ENCODE measurements at regions of chr3 and their contacts with region 1.

Region 1: DNA sequence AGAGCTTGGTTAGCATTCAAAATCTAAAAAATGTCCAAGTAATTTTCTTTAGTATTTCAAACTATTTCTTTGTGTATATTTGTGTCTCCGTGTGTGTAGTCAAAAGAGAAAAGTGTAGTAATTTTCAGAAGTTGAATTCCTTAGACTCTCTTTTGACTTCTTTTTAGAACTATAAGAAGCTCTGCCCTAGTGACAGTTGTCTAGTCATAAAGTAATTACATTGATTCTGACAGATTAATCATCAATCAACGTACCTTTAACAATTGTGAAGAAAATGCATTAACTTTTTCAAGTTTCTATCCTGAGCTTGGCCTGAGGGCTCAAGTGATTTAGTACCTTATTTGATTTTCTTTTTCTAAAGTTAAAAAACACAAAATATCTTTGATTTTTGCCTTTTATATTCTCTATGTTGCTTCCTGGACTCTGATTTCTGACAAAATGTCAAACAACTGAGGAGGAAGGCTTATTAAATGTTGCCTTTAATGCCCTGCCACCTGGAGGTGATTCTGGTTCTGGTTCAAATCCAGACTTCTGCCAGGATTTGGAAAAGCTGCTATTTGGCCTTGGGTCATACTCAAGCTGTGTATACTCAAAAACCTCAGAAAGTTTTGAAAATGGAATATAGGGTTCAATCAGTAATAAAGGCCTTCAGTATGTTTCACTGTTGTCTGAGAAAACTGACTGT is 653.6 kb downstream of the NSUN3 start:
- DNase-seq: peak; percentile 22
- H3K4me3 Mint-ChIP-seq: no peak overlapping the region
- H3K27ac Mint-ChIP-seq: no peak overlapping the region
- H3K4me1 Mint-ChIP-seq: no peaks in the 10 kb centered on the region
- H3K27me3 Mint-ChIP-seq: no peaks in the 10 kb centered on the region
- CTCF ChIP-seq: no peak

Region 2: GRCh38 chr3:94249585-94249984 is 466.9 kb before region 1 on chr3:
- CTCF ChIA-PET with region 1: no interaction called
- intact Hi-C with region 1: loop called (anchors 10 kb)
- DNase-seq: peak; percentile 78
- H3K4me3 Mint-ChIP-seq: no peak overlapping the region
- H3K27ac Mint-ChIP-seq: no peak overlapping the region
- H3K4me1 Mint-ChIP-seq: no peaks in the 10 kb centered on the region
- H3K27me3 Mint-ChIP-seq: no peaks in the 10 kb centered on the region
- CTCF ChIP-seq: peak; percentile 64

Region 3: GRCh38 chr3:94336046-94336710 is 380.3 kb before region 1 on chr3:
- CTCF ChIA-PET with region 1: interaction called, 3 read pairs
- intact Hi-C with region 1: loop called (anchors 1 kb)
- DNase-seq: peak; percentile 21
- H3K4me3 Mint-ChIP-seq: no peak overlapping the region
- H3K27ac Mint-ChIP-seq: no peak overlapping the region
- H3K4me1 Mint-ChIP-seq: peaks cover 10% of the 10 kb centered on the region
- H3K27me3 Mint-ChIP-seq: no peaks in the 10 kb centered on the region
- CTCF ChIP-seq: no peak

Region 4: GRCh38 chr3:94522488-94522887 is 194.0 kb before region 1 on chr3:
- CTCF ChIA-PET with region 1: no interaction called
- intact Hi-C with region 1: loop called (anchors 1 kb)
- DNase-seq: peak; percentile 11
- H3K4me3 Mint-ChIP-seq: no peak overlapping the region
- H3K27ac Mint-ChIP-seq: no peak overlapping the region
- H3K4me1 Mint-ChIP-seq: no peaks in the 10 kb centered on the region
- H3K27me3 Mint-ChIP-seq: no peaks in the 10 kb centered on the region
- CTCF ChIP-seq: peak; percentile 29

Region 5: DNA sequence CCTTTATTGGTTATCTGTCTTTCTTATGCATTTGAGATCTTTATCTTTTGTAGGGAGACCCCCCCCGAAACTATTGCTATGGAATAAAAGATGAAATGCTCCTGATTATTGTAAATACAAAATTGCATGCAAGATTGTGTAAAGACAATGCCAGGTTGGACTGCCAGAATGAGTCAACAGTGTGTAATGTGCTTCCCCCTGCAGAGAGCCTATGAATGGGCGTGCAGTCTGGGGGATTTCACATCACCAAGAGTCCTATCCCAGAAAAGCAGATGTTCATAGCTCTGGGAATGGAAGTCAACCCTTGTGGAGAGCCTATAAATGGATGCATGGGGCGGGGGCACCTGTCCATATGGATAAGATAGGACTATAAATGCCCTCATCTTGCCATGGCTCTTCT is 69.3 kb before region 1 on chr3:
- CTCF ChIA-PET with region 1: no interaction called
- intact Hi-C with region 1: loop called (anchors 1 kb)
- DNase-seq: peak; percentile 48
- H3K4me3 Mint-ChIP-seq: peak overlapping the region; percentile 64
- H3K27ac Mint-ChIP-seq: peak overlapping the region; percentile 96
- H3K4me1 Mint-ChIP-seq: peaks cover 61% of the 10 kb centered on the region
- H3K27me3 Mint-ChIP-seq: no peaks in the 10 kb centered on the region
- CTCF ChIP-seq: no peak

Region 6: GRCh38 chr3:94787734-94788270 is 71.3 kb after region 1 on chr3:
- CTCF ChIA-PET with region 1: no interaction called
- intact Hi-C with region 1: loop called (anchors 10 kb)
- DNase-seq: no peak
- H3K4me3 Mint-ChIP-seq: no peak overlapping the region
- H3K27ac Mint-ChIP-seq: no peak overlapping the region
- H3K4me1 Mint-ChIP-seq: no peaks in the 10 kb centered on the region
- H3K27me3 Mint-ChIP-seq: no peaks in the 10 kb centered on the region
- CTCF ChIP-seq: no peak